Body of pancreas (tissue), 4 donors: ENCODE measurements at regions of chr1 and their contacts with region 1.

Region 1: DNA sequence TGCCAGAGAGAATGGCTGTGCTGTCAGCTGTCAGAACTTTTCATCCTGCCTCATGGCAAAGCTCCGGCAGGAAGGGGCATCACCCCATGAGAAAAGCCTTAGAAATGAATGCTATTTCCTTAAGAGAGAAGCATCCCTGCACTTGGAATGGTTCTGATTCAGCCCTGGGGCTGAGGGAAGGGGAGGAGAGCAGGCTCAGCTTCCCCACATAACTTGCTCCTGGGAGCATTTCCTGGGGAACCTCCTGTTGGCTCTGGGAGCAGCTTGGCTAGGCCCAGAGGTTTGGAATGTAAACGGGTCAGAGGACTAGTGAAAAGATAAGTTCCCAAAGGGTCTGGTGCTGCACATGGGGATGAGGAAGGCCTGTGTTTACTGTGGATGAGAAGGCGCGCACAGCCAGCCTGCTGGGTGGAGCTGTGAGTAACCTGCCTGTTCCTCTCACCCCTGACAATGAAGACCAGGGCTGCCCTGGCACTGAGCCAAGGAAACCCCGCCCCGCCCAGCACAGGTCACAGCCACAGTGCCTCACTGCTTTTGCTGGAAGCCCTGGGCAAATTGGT is 5.0 kb downstream of the PRELP start:
- DNase-seq: peak; percentile 15 to 69 (median 54)
- ATAC-seq: peak; percentile 62
- H3K4me3 ChIP-seq: no peak overlapping the region
- H3K27ac ChIP-seq: peak overlapping the region in 3 of 4 donors; percentile 5 to 31 (median 7)
- H3K4me1 ChIP-seq: no peaks in the 10 kb centered on the region
- H3K27me3 ChIP-seq: no peaks in the 10 kb centered on the region
- CTCF ChIP-seq: no peak
- POLR2A ChIP-seq: no peak

Region 2: GRCh38 chr1:203346060-203346768 is 134.4 kb before region 1 on chr1:
- intact Hi-C with region 1: loop called (anchors 5 kb)
- DNase-seq: no peak
- ATAC-seq: no peak
- H3K4me3 ChIP-seq: no peak overlapping the region
- H3K27ac ChIP-seq: no peak overlapping the region
- H3K4me1 ChIP-seq: peaks cover 16% of the 10 kb centered on the region
- H3K27me3 ChIP-seq: no peaks in the 10 kb centered on the region
- CTCF ChIP-seq: no peak
- POLR2A ChIP-seq: no peak